Activated B cell treated with CpG ODN at 0.5 μM for 24 hours (primary cell): ENCODE measurements at regions of chr3 and their contacts with region 1.

Region 1: DNA sequence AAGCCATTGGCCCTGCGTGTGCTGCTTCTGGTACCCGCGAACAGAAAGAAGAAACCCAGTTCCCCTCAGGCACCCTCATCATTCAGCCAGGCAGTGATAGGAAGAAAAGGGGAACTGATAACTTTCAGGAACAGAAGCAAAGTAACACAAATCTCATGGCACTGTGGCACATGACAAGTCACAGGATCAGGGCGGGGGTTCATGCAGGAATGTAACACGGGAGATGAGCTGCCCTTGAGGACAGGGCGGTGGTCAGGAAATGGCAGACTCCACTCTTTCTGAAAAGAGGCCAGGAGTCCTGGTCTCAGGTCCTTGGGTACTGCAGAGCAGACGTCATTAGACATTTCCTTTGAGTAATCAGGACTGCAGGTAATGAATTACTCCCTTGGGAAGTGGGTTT is 95.5 kb downstream of the CCNL1 start:
- DNase-seq: no peak
- ATAC-seq: peak; percentile 80
- H3K4me3 Mint-ChIP-seq: peak overlapping the region; percentile 6
- H3K27ac Mint-ChIP-seq: peak overlapping the region; percentile 6
- H3K4me1 Mint-ChIP-seq: peaks cover 31% of the 10 kb centered on the region
- H3K27me3 Mint-ChIP-seq: no peaks in the 10 kb centered on the region
- CTCF ChIP-seq: no peak

Region 2: DNA sequence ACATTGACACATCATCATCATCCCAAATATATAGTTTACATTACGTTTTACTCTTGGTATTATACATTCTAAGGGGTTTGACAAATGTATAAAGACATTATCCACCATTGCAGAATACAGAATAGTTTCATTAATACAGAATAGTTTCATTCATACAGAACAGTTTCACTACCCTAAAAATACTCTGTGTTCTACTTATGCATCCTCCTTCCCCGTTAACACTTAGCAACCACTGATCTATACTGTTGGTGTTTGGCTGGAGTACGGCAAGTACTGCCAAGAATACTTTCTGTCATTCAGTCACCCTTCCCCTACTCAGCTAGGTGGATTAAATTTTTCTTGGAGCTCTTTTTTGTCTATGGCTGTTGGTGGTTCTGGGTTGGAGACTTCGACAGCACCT is 204.8 kb before region 1 on chr3:
- CTCF ChIA-PET with region 1: no interaction called
- POLR2A ChIA-PET with region 1: no interaction called
- intact Hi-C with region 1: loop called (anchors 5 kb)
- DNase-seq: no peak
- ATAC-seq: peak; percentile 90
- H3K4me3 Mint-ChIP-seq: no peak overlapping the region
- H3K27ac Mint-ChIP-seq: no peak overlapping the region
- H3K4me1 Mint-ChIP-seq: peaks cover 6% of the 10 kb centered on the region
- H3K27me3 Mint-ChIP-seq: no peaks in the 10 kb centered on the region
- CTCF ChIP-seq: no peak

Region 3: DNA sequence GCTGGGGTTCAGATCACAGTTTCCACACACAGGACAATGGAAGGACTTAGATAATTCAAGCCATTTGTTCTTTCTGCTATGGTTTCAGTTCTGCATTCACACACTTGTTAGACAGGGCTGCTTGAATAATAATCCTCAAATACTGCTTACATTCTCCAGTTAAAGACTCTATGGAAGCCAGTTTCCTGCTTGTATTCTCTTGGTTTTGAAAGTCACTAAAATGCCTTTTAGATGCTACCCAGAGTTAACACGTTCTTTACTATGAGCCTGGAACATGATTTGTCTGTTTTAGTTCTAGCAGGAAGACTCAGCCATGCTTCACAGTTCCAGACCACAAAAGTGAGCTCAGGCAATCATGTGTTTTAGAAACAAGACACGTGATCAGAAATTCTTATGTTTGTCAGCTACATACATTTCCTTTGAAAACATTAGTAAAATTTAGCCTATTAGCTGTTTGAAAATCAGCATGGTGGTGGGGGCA is 85.9 kb before region 1 on chr3:
- CTCF ChIA-PET with region 1: no interaction called
- POLR2A ChIA-PET with region 1: no interaction called
- intact Hi-C with region 1: loop called (anchors 5 kb)
- DNase-seq: no peak
- ATAC-seq: peak; percentile 90
- H3K4me3 Mint-ChIP-seq: peak overlapping the region; percentile 61
- H3K27ac Mint-ChIP-seq: peak overlapping the region; percentile 95
- H3K4me1 Mint-ChIP-seq: peaks cover 51% of the 10 kb centered on the region
- H3K27me3 Mint-ChIP-seq: no peaks in the 10 kb centered on the region
- CTCF ChIP-seq: no peak

Region 4: GRCh38 chr3:157046520-157046919 is 17.9 kb before region 1 on chr3:
- CTCF ChIA-PET with region 1: no interaction called
- POLR2A ChIA-PET with region 1: no interaction called
- intact Hi-C with region 1: loop called (anchors 1 kb)
- DNase-seq: no peak
- ATAC-seq: no peak
- H3K4me3 Mint-ChIP-seq: no peak overlapping the region
- H3K27ac Mint-ChIP-seq: no peak overlapping the region
- H3K4me1 Mint-ChIP-seq: peaks cover 23% of the 10 kb centered on the region
- H3K27me3 Mint-ChIP-seq: no peaks in the 10 kb centered on the region
- CTCF ChIP-seq: no peak